Activated CD4-positive, alpha-beta memory T cell treated with anti-CD3 and anti-CD28 coated beads for 36 hours (primary cell): ENCODE measurements at regions of chr20 and their contacts with region 1.

Region 1: DNA sequence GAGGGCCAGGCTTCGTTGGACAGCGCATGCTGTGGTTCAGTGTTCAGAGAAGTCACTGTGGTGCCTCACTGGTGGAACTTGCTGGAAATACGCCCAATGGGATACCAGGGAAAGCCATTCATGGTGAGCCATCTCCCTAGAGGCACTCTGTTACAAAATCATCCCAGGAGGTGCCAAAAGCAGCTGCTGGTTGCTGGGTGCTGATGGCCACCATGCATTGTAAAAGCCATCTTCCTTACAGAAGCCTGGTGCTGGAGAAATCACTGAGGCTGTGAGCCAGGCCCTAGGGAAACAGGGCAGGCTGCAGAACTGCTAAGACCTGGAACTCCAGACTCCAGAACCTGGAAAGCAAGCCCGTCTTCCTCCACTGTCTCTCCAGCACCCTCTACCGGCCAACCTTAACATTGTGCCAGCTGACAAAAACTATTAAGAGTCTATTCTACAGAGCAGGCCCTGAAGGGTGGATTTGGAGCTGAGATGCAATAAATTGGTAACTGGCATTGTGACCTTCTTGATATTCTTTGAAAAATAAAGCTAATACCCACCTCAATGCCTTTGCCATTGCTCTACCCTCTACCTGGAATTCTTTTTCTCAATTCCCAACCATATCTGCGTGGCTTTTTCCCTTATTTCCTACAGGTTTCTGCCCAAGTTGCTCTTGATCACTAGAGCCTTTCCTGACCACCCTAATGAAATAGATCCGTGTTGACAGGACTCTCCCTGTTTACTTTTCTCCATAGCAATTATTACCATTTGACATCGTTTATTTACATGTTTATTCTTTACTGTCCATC is 18.5 kb downstream of the SNRPB start:
- DNase-seq: peak; percentile 77
- H3K4me3 Mint-ChIP-seq: no peak overlapping the region
- H3K27ac Mint-ChIP-seq: no peak overlapping the region
- H3K4me1 Mint-ChIP-seq: peaks cover 35% of the 10 kb centered on the region
- H3K27me3 Mint-ChIP-seq: no peaks in the 10 kb centered on the region

Region 2: GRCh38 chr20:1965520-1966351 is 486.4 kb before region 1 on chr20:
- CTCF ChIA-PET with region 1: interaction called, 5 read pairs
- POLR2A ChIA-PET with region 1: no interaction called
- intact Hi-C with region 1: loop called (anchors 2 kb)
- DNase-seq: peak; percentile 88
- H3K4me3 Mint-ChIP-seq: peak overlapping the region; percentile 24
- H3K27ac Mint-ChIP-seq: no peak overlapping the region
- H3K4me1 Mint-ChIP-seq: peaks cover 10% of the 10 kb centered on the region
- H3K27me3 Mint-ChIP-seq: peaks cover 20% of the 10 kb centered on the region

Region 3: DNA sequence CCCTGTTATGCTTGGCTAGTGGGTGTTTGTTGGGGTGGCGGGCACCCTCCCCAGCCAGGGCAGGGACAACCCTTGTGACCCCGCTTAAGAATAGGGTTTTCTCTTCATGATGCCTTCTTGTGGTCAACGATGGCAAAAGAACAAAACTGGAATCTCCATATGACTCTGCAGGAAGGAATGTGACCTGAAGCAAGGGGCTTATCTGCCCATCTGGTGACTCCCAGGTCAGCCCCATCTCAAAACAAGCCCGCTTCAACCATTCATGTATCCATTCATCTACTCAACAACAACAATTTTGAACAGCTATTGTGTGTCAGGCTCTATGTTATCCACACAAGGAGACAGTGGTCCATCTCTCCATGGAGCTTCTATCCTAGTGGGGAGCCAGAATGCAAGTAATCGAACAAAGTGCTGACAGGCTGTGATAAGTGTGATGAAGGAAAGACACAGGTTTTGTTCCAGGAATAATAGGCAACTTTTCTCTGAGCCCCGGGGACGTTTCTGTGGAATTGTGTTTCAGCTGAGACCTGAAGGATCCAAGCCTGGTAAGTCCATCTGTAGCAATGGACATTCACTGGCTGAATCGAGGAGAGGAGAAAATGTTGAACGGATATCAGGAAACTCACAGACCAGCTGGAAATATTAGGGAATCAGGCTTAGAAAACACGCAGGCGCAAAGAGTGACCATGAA is 102.2 kb before region 1 on chr20:
- CTCF ChIA-PET with region 1: no interaction called
- POLR2A ChIA-PET with region 1: no interaction called
- intact Hi-C with region 1: loop called (anchors 1 kb)
- DNase-seq: no peak
- H3K4me3 Mint-ChIP-seq: no peak overlapping the region
- H3K27ac Mint-ChIP-seq: no peak overlapping the region
- H3K4me1 Mint-ChIP-seq: peaks cover 2% of the 10 kb centered on the region
- H3K27me3 Mint-ChIP-seq: peaks cover 21% of the 10 kb centered on the region

Region 4: DNA sequence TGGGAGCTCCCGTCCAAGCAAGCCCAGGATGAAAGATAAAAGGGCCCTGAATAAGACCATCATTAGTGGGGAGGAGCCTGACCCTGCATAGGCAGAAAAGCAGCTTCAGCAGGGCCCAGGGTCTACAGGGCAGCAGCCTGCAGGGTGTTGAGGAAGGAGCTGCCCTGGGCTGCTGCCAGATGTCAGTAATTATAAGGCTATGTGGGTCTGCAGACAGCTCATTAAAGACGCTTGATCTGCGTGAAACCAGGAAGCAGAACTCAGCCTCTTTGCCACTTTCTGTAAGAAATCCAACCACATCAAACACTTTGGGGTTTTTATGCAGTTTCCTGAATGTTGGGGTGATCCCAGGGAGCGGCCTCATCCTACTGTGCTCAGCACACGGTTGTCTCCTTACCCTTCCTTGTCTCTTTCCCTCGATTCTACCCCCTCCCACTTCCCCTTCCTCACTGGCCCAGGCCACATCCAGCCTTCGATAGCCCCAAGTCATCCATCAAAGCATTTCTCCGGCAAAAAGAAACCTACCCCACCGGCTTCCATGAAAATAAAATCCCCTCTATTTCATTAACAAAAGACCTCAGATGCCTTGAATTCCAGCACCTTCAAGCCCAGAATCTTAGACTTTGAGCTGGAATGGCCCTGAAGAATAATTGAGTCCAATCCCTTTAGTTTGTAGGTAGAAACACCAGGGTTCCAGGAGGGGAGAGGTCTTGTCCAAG is 72.5 kb before region 1 on chr20:
- CTCF ChIA-PET with region 1: interaction called, 13 read pairs
- POLR2A ChIA-PET with region 1: no interaction called
- intact Hi-C with region 1: no loop called
- DNase-seq: peak; percentile 36
- H3K4me3 Mint-ChIP-seq: peak overlapping the region; percentile 8
- H3K27ac Mint-ChIP-seq: no peak overlapping the region
- H3K4me1 Mint-ChIP-seq: peaks cover 21% of the 10 kb centered on the region
- H3K27me3 Mint-ChIP-seq: peaks cover 10% of the 10 kb centered on the region

Region 5: DNA sequence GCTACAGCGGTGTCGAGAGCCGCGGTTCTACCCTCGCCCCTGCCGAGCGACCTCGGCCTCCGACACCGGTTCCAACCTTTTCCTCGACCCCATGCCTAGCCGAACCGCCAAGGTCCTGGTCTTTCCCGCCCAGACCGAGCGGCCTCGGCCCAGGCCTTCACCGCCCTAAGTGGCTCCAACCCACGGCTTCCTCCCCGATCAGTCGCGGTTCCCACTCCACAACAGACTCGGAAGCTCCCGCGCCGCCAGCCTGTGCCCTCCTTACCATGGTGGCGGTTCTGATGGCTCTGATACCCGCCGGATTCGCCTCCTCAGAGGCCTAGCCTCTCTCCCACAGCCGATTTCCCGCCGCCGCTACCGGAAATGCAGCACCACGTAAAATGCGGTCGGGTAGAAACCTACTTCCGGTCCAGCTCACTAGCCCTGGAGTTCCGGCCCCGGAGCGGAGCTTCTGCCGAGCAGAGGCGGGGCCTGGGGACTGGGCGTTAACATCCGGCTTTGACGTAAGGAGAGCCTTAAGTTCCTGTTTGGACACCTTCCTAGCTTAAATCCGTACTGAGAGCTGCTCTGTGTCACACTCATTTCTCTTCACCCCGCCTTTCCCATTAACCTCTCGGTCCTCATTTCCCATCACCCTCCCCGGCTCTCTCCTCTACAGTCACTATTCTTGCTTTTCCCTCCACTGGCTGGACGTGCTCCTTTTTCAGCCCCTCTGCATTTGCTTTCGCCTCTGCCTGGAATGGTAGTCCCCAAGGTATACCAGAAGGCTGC is 18.5 kb after region 1 on chr20 and contains the start of gene SNRPB:
- CTCF ChIA-PET with region 1: interaction called, 36 read pairs
- POLR2A ChIA-PET with region 1: interaction called, 5 read pairs
- intact Hi-C with region 1: no loop called
- DNase-seq: peak; percentile 98
- H3K4me3 Mint-ChIP-seq: peak within 1 kb of the TSS; percentile 100
- H3K27ac Mint-ChIP-seq: peak within 1 kb of the TSS; percentile 100
- H3K4me1 Mint-ChIP-seq: peaks cover 43% of the 10 kb centered on the region
- H3K27me3 Mint-ChIP-seq: no peaks in the 10 kb centered on the region
- total RNA-seq, gene SNRPB: 452 TPM

Region 6: GRCh38 chr20:2626853-2627541 is 174.9 kb after region 1 on chr20:
- CTCF ChIA-PET with region 1: no interaction called
- POLR2A ChIA-PET with region 1: no interaction called
- intact Hi-C with region 1: no loop called
- DNase-seq: no peak
- H3K4me3 Mint-ChIP-seq: no peak overlapping the region
- H3K27ac Mint-ChIP-seq: no peak overlapping the region
- H3K4me1 Mint-ChIP-seq: no peaks in the 10 kb centered on the region
- H3K27me3 Mint-ChIP-seq: peaks cover 12% of the 10 kb centered on the region